ENCODE measurements at regions of chr18 and their contacts with region 1.

Region 1: DNA sequence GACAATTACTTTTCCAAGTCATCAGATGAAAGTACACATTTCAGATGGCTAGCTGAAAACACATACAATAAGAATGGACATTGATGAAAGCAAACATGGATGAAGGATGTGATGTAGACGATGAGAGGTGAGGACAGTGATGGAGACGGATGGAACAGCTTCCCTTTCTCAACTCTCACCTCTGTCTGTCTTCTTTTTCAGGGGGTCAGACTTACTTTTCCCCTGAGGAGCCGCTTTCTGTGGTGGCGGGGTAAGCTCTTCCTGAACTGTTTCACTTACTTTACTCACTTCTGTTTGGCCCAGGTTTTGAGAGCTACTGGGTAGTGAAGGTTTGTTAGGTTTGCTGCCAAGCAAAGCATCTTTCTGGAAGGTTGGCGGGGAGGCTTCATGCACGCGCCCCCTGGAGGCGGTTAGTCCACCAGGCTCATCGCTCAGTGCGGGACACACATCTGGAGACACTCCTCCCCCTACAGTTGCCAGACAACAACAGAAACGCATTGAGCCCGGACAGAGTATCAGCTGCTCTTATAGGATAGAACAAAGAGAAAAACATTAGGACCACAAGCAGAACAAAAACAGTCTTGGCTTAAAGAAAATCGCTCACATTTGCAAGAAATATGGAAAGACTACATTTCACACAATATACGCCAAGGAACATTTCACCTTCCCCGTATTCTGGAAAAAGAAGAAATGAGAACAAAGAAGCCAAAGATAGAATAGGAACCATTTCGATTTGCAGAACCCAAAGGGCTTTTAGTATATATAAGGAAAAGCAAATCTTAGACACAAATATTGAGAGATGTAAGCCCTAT is 90.5 kb downstream of the MYOM1 start:
- DNase-seq: peak; percentile 84
- H3K4me3 ChIP-seq: no peak overlapping the region; a peak in 1 of 4 replicates
- H3K27ac ChIP-seq: no peak overlapping the region
- H3K4me1 ChIP-seq: peaks cover 0 to 2% of the 10 kb centered on the region in 2 experiments; a peak in 2 of 4 replicates
- H3K27me3 ChIP-seq: no peaks in the 10 kb centered on the region
- CTCF ChIP-seq: peak; percentile 87
- EP300 ChIP-seq: no peak
- RAD21 ChIP-seq: peak; percentile 71

Region 2: DNA sequence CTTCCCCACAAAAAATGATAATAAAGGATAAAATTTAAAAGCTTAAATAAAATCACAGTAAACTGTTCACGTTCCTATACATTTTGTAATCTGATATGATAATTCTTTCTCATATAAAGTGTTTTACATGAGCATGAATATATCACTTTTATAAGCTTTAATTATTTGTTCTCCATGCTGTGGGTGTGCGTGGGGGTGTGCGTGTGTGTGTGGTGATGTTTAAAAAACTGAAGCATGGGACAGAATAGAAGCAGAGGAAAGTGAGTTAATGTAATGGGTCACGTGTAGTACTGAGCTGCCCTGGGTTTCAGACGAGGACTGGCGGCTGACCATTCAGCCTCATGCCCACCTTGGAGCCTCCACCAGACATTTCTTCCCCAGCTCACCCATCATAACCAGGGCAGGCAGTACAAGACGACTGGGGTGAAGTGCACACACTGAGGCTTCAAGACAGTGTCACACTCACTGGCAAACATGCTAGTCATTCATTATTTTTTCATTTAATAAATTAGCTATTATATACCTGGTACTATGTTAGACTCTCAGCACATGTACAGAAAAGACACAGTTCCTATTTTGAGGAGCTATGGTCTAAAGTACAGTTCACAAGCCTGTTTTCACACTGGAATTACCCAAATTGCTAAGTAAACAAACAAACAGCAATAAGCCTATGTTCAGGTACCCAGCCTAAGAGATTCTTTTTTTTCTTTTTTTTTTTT is 19.1 kb before region 1 on chr18:
- CTCF ChIA-PET with region 1: interaction called, 16 read pairs
- POLR2A ChIA-PET with region 1: no interaction called
- DNase-seq: no peak
- H3K4me3 ChIP-seq: no peak overlapping the region
- H3K27ac ChIP-seq: no peak overlapping the region
- H3K4me1 ChIP-seq: no peaks in the 10 kb centered on the region; a peak in 1 of 4 replicates
- H3K27me3 ChIP-seq: no peaks in the 10 kb centered on the region
- CTCF ChIP-seq: no peak
- EP300 ChIP-seq: no peak
- RAD21 ChIP-seq: no peak

Region 3: DNA sequence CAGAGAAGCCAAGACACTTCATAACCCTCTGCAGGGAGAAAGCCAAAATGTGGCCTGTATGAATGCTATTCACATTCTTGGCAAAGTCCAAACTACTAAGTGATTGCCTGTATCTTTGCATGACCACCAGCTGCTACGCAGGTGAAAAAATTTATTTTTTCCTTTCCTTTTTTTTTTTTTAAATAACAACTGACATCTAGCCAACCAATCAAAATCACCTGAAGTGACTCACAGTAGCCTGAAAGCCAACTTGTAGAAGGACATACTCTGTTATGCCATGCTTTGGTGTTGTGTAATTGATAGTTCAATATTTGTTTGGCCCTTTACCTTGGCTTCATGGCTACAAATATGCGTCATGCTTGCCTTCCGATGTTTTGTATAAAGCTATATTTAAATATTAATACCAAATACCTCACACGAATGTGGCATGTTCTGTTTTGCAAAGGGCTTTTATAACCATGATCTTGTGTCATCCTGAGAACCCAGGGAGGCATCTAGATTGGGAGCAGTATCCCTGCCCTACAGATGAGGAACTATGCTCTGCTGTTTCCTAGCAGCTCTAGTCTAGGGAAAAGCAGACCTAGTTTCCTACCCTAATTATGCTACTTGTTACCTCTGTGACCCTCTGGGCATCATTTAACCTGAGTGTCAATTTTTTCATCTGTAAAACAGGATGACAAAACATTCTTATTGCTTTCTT is 11.6 kb before region 1 on chr18:
- CTCF ChIA-PET with region 1: interaction called, 16 read pairs
- POLR2A ChIA-PET with region 1: no interaction called
- DNase-seq: no peak
- H3K4me3 ChIP-seq: no peak overlapping the region
- H3K27ac ChIP-seq: no peak overlapping the region
- H3K4me1 ChIP-seq: no peaks in the 10 kb centered on the region; a peak in 1 of 4 replicates
- H3K27me3 ChIP-seq: no peaks in the 10 kb centered on the region
- CTCF ChIP-seq: no peak
- EP300 ChIP-seq: no peak
- RAD21 ChIP-seq: no peak